ENCODE measurements at regions of chr6 and their contacts with region 1.

Region 1: DNA sequence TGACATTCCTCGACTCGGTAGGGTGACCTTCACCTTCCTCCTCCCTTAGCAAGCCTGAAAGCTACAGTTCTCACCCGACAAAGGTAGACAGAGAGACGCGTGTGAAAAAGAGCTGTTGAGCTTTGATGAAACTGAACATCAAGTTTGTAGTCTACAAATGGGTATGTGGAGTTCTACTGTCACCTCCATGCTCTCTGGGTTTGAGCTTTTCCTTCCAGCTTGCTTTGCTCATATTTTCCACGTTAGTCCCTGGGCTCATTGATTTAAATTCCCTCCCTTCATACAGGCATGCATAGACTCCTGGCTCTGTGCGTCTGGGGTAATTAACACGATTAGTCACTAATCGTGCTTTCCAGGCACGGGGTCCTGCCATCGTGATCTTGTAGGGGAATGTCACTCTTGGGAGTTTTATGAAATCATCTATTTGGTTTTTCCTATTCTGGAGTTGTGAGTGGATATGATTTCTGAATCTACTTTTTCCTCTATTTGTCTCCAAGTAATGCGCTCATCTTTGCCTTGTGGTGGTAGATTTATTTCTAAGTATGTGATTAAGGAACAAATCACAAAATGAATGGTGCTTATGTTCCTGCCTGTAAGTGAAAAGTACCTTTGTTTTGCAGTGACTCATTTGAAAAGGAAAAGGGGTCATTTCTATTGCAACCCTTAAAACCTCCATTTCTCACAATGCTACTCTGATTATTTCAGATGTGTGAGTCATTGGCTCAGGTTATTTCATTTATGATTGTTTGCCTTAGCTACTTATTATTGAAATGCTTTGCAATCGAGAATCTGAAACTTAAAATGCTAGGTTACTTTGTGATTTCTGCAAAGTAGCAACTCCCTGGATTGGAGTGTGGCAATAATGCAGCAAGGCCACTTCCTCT is 154.6 kb downstream of the ZDHHC14 start:
- DNase-seq: peak; percentile 8
- H3K4me3 Mint-ChIP-seq: peak overlapping the region; percentile 2
- H3K27ac Mint-ChIP-seq: peak overlapping the region; percentile 73
- H3K4me1 Mint-ChIP-seq: peaks cover 55% of the 10 kb centered on the region
- H3K27me3 Mint-ChIP-seq: peaks cover 8% of the 10 kb centered on the region

Region 2: GRCh38 chr6:157323255-157323965 is 212.2 kb before region 1 on chr6 and contains the start of gene TMEM242:
- intact Hi-C with region 1: loop called (anchors 2 kb)
- DNase-seq: peak; percentile 86
- H3K4me3 Mint-ChIP-seq: peak within 1 kb of the TSS; percentile 99
- H3K27ac Mint-ChIP-seq: peak within 1 kb of the TSS; percentile 91
- H3K4me1 Mint-ChIP-seq: peaks cover 49% of the 10 kb centered on the region
- H3K27me3 Mint-ChIP-seq: peaks cover 16% of the 10 kb centered on the region
- total RNA-seq, gene TMEM242: 10.1 and 12.7 TPM in 2 replicates

Region 3: DNA sequence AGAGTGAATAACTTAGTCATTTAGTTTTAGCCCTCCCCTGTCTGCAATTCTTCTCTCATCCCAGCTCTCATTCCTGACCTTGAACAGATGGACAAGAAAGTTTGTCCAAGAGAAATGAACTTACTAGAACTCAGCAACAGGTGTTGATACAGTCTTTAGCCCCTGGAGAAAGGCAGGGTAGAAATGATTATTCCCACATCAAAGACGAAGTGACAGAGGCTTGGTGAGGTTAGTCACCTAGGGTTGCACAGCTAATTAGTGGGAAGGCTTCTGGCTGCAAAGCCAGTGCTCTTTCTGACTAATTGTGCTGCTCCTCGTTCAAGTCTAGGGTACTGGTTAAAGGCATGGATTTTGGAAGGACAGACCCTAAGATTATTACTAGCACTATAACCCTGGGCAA is 150.1 kb before region 1 on chr6:
- intact Hi-C with region 1: loop called (anchors 1 kb)
- DNase-seq: no peak
- H3K4me3 Mint-ChIP-seq: peak overlapping the region; percentile 65
- H3K27ac Mint-ChIP-seq: peak overlapping the region; percentile 40
- H3K4me1 Mint-ChIP-seq: peaks cover 37% of the 10 kb centered on the region
- H3K27me3 Mint-ChIP-seq: no peaks in the 10 kb centered on the region

Region 4: GRCh38 chr6:157443066-157443800 is 92.3 kb before region 1 on chr6:
- intact Hi-C with region 1: loop called (anchors 1 kb)
- DNase-seq: no peak
- H3K4me3 Mint-ChIP-seq: peak overlapping the region; percentile 43
- H3K27ac Mint-ChIP-seq: peak overlapping the region; percentile 85
- H3K4me1 Mint-ChIP-seq: peaks cover 30% of the 10 kb centered on the region
- H3K27me3 Mint-ChIP-seq: peaks cover 3% of the 10 kb centered on the region

Region 5: GRCh38 chr6:157514659-157515496 is 20.7 kb before region 1 on chr6:
- intact Hi-C with region 1: no loop called
- DNase-seq: no peak
- H3K4me3 Mint-ChIP-seq: no peak overlapping the region
- H3K27ac Mint-ChIP-seq: no peak overlapping the region
- H3K4me1 Mint-ChIP-seq: peaks cover 17% of the 10 kb centered on the region
- H3K27me3 Mint-ChIP-seq: no peaks in the 10 kb centered on the region

Region 6: GRCh38 chr6:157558049-157558448 is 22.5 kb after region 1 on chr6:
- intact Hi-C with region 1: loop called (anchors 1 kb)
- DNase-seq: no peak
- H3K4me3 Mint-ChIP-seq: no peak overlapping the region
- H3K27ac Mint-ChIP-seq: peak overlapping the region; percentile 66
- H3K4me1 Mint-ChIP-seq: peaks cover 53% of the 10 kb centered on the region
- H3K27me3 Mint-ChIP-seq: peaks cover 12% of the 10 kb centered on the region

Region 7: GRCh38 chr6:157569543-157569942 is 34.0 kb after region 1 on chr6:
- intact Hi-C with region 1: loop called (anchors 1 kb)
- DNase-seq: no peak
- H3K4me3 Mint-ChIP-seq: peak overlapping the region; percentile 47
- H3K27ac Mint-ChIP-seq: peak overlapping the region; percentile 4
- H3K4me1 Mint-ChIP-seq: peaks cover 24% of the 10 kb centered on the region
- H3K27me3 Mint-ChIP-seq: peaks cover 14% of the 10 kb centered on the region

Region 8: GRCh38 chr6:157620566-157621343 is 85.2 kb after region 1 on chr6:
- intact Hi-C with region 1: no loop called
- DNase-seq: no peak
- H3K4me3 Mint-ChIP-seq: no peak overlapping the region
- H3K27ac Mint-ChIP-seq: no peak overlapping the region
- H3K4me1 Mint-ChIP-seq: no peaks in the 10 kb centered on the region
- H3K27me3 Mint-ChIP-seq: no peaks in the 10 kb centered on the region

Measured in activated T-helper 1 cell treated with anti-CD3 and anti-CD28 coated beads, Interleukin-12 subunit alpha, Interleukin-12 subunit beta, Interleukin-2, Interleukin-4 antibody, amounts not matched to agents 30 ng/mL and 10 ng/mL and 1 ng/mL, durations not matched to agents 14 hours and 24 hours and 36 hours (primary cell).